CD4-positive, alpha-beta T cell (primary cell): ENCODE measurements at regions of chr5 and their contacts with region 1.

Region 1: DNA sequence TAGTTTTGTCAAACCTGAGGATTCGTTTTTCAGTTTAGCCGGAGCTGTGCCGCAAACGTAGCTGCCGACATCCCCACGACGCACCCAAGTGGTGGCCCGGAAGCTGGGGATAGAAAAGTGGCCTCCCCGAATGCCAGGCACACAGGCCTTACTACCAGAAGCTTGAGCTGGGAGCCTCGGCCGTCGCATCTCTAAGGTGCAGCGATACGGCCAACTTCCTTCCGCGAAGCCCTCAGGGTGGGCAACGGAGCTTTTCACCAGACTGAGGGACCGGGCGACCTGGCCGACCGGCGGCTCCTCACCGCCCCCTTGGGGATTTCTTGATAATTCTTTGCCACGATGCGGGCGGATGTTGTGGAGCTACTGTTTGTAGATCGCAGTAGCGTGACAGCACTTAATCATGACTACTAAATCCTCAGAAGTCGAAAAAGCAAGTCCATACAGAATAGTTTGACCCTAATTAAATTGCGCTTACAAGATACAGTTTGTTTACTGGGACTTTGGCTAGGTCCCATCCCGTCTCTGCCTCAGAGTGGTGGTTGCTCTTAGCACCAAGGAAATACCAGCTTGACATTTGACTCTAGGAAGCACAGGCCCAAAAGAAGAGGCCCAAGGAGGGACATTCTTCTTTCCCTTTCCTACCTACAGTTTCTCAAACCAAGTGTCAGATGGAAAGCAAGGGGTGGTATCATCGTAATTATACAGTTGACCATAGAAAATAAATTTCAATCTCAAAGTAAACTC is 613 bp upstream of the TMEM267 start:
- DNase-seq: peak; percentile 74 to 92 (median 82)
- ATAC-seq: peak; percentile 70
- H3K4me3 ChIP-seq: peak overlapping the region; percentile 77
- H3K4me3 Mint-ChIP-seq: peak overlapping the region; percentile 93
- H3K27ac ChIP-seq: peak overlapping the region; percentile 95
- H3K27ac Mint-ChIP-seq: peak overlapping the region; percentile 99
- H3K4me1 ChIP-seq: peaks cover 18% of the 10 kb centered on the region
- H3K4me1 Mint-ChIP-seq: peaks cover 61% of the 10 kb centered on the region
- H3K27me3 ChIP-seq: no peaks in the 10 kb centered on the region
- H3K27me3 Mint-ChIP-seq: no peaks in the 10 kb centered on the region
- CTCF ChIP-seq: peak; percentile 83

Region 2: DNA sequence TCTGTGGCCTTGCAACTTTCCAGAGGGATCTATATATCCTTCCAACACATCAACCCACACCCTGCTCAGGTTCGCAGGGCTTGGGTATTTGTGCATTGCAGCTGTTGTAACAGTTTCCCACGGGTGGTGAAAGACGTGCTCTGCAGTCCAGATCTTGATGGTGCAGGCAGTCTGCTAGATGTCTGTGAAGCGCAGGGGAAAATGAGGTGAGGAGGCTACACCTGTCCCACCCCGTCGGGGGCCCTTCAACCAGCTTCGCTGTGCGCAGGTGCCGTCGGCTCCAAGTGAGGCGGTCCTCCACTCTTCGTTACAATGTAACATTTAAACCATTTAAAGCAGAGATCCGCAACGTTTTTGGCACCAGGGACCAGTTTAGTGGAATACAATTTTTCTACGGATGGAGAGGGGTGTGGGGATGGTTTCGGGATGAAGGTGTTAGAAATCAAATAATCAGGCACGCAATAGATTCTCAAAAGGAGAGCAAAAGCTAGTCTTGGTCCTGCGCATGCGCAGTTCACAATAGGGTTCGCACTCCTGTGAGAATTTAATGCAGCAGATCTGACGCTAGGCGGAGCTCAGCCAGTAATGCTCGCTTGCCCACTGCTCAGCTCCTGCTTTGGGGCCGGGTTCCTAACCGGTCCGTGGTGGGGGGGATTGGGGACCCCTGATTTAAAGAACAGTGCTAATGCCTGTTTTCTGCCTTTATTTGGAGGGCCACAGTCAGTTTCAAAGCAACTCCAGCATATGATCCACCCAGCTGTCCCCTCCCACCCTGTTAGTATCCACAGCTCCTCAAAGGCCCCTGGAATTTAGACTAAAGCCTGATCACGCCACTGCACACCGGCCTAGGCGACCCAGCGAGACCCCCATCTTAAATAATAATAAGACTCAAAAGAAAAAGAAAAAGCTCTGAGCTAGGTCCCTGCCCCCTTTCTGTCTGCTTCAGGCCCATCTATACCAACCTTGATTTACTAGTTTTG is 575.5 kb before region 1 on chr5:
- CTCF ChIA-PET with region 1: interaction called, 4 read pairs
- POLR2A ChIA-PET with region 1: interaction called, 19 read pairs
- intact Hi-C with region 1: loop called in 1 of 2 experiments (anchors 5 kb)
- DNase-seq: peak; percentile 80 to 96 (median 90)
- ATAC-seq: peak; percentile 94
- H3K4me3 ChIP-seq: peak overlapping the region; percentile 68
- H3K4me3 Mint-ChIP-seq: peak overlapping the region; percentile 93
- H3K27ac ChIP-seq: no peak overlapping the region
- H3K27ac Mint-ChIP-seq: peak overlapping the region; percentile 91
- H3K4me1 ChIP-seq: peaks cover 12% of the 10 kb centered on the region
- H3K4me1 Mint-ChIP-seq: peaks cover 24% of the 10 kb centered on the region
- H3K27me3 ChIP-seq: peaks cover 4 to 16% of the 10 kb centered on the region in 2 experiments
- H3K27me3 Mint-ChIP-seq: peaks cover 15% of the 10 kb centered on the region
- CTCF ChIP-seq: peak; percentile 89

Region 3: GRCh38 chr5:43019614-43020293 is 464.5 kb before region 1 on chr5:
- CTCF ChIA-PET with region 1: interaction called, 10 read pairs
- POLR2A ChIA-PET with region 1: interaction called, 91 read pairs
- intact Hi-C with region 1: no loop called
- DNase-seq: peak; percentile 73 to 97 (median 84)
- ATAC-seq: peak; percentile 61
- H3K4me3 ChIP-seq: peak overlapping the region; percentile 80
- H3K4me3 Mint-ChIP-seq: peak overlapping the region; percentile 99
- H3K27ac ChIP-seq: peak overlapping the region; percentile 98
- H3K27ac Mint-ChIP-seq: peak overlapping the region; percentile 100
- H3K4me1 ChIP-seq: peaks cover 42% of the 10 kb centered on the region
- H3K4me1 Mint-ChIP-seq: peaks cover 57% of the 10 kb centered on the region
- H3K27me3 ChIP-seq: no peaks in the 10 kb centered on the region
- H3K27me3 Mint-ChIP-seq: no peaks in the 10 kb centered on the region
- CTCF ChIP-seq: peak; percentile 69

Region 4: DNA sequence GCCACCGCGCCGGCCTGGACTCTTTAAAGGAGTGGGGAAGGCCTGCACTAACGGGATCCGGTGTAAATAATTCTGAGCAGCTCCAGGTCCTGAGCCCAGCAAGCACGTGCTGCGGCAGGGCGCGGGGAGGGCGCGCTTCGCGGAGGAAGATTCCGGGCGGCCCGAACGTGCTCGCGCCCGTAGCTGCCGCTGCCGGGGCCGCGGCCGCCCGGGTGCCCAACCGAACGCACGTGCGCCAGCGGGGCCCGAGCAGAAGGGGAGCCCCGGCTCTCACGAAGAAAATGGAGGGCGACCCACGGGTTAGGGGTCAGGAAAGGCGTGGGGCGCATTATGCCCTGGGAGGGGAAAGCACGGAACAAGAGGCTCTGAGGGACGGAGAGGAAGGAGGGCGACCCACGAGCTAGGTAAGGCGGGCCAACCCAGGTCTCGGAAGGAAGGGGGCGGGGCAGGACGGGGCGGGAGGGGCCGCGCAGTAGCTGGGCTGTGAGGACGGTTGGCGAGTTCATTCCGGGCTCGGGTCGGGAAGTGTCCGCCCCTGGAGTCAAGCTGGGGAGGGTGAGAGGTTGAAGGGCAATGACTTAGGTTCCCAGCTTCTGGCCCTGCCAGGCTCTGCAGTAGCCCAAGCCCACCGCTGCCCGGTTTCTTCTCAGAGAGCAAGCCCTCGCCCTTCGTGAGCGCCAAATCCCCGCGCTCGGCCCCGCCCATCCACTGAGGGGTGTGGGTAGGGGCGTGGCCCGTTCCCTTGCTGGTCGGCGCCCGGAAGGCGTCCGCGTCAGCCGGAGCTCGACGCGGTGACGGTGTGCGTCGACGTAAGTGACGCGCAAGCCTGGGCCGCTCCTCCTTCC is 363.3 kb before region 1 on chr5 and contains the start of gene ZNF131:
- CTCF ChIA-PET with region 1: interaction called, 14 read pairs
- POLR2A ChIA-PET with region 1: interaction called, 146 read pairs
- intact Hi-C with region 1: loop called (anchors 1 to 5 kb)
- DNase-seq: peak; percentile 92 to 99 (median 97)
- ATAC-seq: peak; percentile 84
- H3K4me3 ChIP-seq: peak within 1 kb of the TSS; percentile 91
- H3K4me3 Mint-ChIP-seq: peak within 1 kb of the TSS; percentile 97
- H3K27ac ChIP-seq: peak within 1 kb of the TSS; percentile 93 to 94
- H3K27ac Mint-ChIP-seq: peak within 1 kb of the TSS; percentile 94
- H3K4me1 ChIP-seq: peaks cover 30% of the 10 kb centered on the region
- H3K4me1 Mint-ChIP-seq: peaks cover 39% of the 10 kb centered on the region
- H3K27me3 ChIP-seq: no peaks in the 10 kb centered on the region
- H3K27me3 Mint-ChIP-seq: no peaks in the 10 kb centered on the region
- CTCF ChIP-seq: no peak
- total RNA-seq, gene ZNF131: 71.7 to 72.4 TPM

Region 5: DNA sequence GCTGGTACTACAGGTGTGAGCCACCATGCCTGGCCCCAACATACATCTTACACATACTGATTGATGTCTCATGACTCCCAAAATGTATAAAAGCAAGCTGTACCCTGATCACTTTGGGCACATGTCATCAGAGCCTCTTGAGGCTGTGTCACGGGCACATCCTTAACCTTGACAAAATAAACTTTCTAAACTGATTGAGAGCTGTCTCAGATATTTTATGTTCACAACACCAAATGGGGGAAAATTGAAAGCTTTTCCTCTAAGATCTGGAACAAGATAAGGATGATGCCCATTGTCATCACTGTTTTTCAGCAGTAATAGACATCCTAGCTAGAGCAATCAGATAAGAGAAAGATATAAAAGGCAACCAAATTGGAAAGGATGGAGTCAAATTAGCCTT is 13.9 kb before region 1 on chr5:
- CTCF ChIA-PET with region 1: interaction called, 7 read pairs
- POLR2A ChIA-PET with region 1: interaction called, 10 read pairs
- intact Hi-C with region 1: no loop called
- DNase-seq: no peak
- ATAC-seq: no peak
- H3K4me3 ChIP-seq: no peak overlapping the region
- H3K4me3 Mint-ChIP-seq: no peak overlapping the region
- H3K27ac ChIP-seq: no peak overlapping the region
- H3K27ac Mint-ChIP-seq: no peak overlapping the region
- H3K4me1 ChIP-seq: no peaks in the 10 kb centered on the region
- H3K4me1 Mint-ChIP-seq: peaks cover 25% of the 10 kb centered on the region
- H3K27me3 ChIP-seq: no peaks in the 10 kb centered on the region
- H3K27me3 Mint-ChIP-seq: no peaks in the 10 kb centered on the region
- CTCF ChIP-seq: no peak

Region 6: GRCh38 chr5:43556857-43557542 is 72.7 kb after region 1 on chr5 and contains the start of gene PAIP1:
- CTCF ChIA-PET with region 1: interaction called, 25 read pairs
- POLR2A ChIA-PET with region 1: interaction called, 163 read pairs
- intact Hi-C with region 1: loop called (anchors 1 kb)
- DNase-seq: peak; percentile 65 to 93 (median 78)
- ATAC-seq: peak; percentile 82
- H3K4me3 ChIP-seq: peak within 1 kb of the TSS; percentile 96
- H3K4me3 Mint-ChIP-seq: peak within 1 kb of the TSS; percentile 97
- H3K27ac ChIP-seq: peak within 1 kb of the TSS; percentile 85 to 89
- H3K27ac Mint-ChIP-seq: peak within 1 kb of the TSS; percentile 94
- H3K4me1 ChIP-seq: peaks cover 27% of the 10 kb centered on the region
- H3K4me1 Mint-ChIP-seq: peaks cover 6% of the 10 kb centered on the region
- H3K27me3 ChIP-seq: no peaks in the 10 kb centered on the region
- H3K27me3 Mint-ChIP-seq: peaks cover 11% of the 10 kb centered on the region
- CTCF ChIP-seq: peak; percentile 59
- total RNA-seq, gene PAIP1: 33.9 to 35.1 TPM